ENCODE measurements at regions of chr22 and their contacts with region 1.

Region 1: GRCh38 chr22:19495562-19496323 is 16.0 kb downstream of the CDC45 start:
- DNase-seq: no peak

Region 2: DNA sequence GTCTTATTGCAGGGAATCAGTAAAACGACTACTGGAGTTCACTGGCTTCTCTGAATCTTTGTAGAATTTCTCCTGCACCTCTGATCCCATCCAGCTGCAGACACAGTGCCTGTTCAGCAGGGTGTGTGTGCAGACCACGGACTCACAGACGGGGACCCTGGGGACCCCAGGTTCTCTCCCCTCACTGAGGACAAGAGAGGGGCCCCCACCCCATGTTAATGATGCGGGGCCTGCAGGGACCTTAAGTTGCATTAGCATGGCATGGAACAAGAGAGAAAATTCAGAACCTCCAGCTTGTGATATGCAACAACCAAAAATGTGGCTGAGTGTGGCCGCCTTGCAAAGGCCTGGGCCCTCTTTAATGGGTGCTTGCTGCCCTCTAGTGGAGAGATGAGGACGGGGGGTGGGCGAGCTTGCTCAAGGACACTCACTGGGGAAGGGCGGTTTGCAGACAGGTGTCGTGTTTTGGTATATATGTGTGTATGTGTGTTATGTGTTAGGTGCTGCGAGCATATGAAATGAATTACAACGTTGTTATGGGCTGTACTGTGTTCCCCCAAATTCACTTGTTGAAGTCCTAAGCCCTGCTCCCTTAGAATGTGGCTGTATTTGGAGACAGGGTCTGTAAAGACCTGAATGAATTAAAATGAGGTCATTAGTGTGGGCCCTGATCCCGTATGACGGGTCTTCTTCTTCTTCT is 134.1 kb after region 1 on chr22:
- intact Hi-C with region 1: loop called (anchors 5 kb)
- DNase-seq: peak; percentile 86